Activated CD8-positive, alpha-beta T cell treated with anti-CD3 and anti-CD28 coated beads for 36 hours (primary cell): ENCODE measurements at regions of chr3 and their contacts with region 1.

Region 1: GRCh38 chr3:56753206-56753820 is 48.4 kb downstream of the ARHGEF3 start:
- DNase-seq: peak; percentile 75
- ATAC-seq: peak; percentile 93
- H3K4me3 Mint-ChIP-seq: no peak overlapping the region
- H3K27ac Mint-ChIP-seq: peak overlapping the region; percentile 73
- H3K4me1 Mint-ChIP-seq: peaks cover 63% of the 10 kb centered on the region
- H3K27me3 Mint-ChIP-seq: no peaks in the 10 kb centered on the region
- CTCF ChIP-seq: no peak

Region 2: DNA sequence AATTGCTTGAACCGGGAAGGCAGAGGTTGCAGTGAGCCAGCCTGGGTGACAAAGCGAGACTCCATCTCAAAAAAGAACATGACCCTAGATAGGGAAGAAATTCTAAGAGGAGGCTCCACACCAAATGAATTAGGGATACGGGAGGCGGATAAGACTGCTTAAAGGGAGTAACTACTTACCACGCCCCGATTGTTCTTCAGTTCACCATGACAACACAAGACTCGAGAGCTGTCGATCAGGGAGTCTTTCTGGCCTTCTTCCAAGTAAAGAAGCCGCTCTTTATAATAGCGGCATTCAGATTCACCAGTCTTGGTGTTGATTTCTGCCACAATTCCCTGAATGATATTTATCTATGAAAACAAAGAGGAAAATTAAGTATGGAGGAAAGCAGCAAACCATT is 16.3 kb before region 1 on chr3:
- CTCF ChIA-PET with region 1: interaction called, 17 read pairs
- POLR2A ChIA-PET with region 1: interaction called, 4 read pairs
- intact Hi-C with region 1: no loop called
- DNase-seq: no peak
- ATAC-seq: no peak
- H3K4me3 Mint-ChIP-seq: no peak overlapping the region
- H3K27ac Mint-ChIP-seq: no peak overlapping the region
- H3K4me1 Mint-ChIP-seq: peaks cover 57% of the 10 kb centered on the region
- H3K27me3 Mint-ChIP-seq: no peaks in the 10 kb centered on the region
- CTCF ChIP-seq: no peak

Region 3: GRCh38 chr3:56783644-56784447 is 30.5 kb after region 1 on chr3:
- CTCF ChIA-PET with region 1: interaction called, 22 read pairs
- POLR2A ChIA-PET with region 1: interaction called, 26 read pairs
- intact Hi-C with region 1: loop called (anchors 5 kb)
- DNase-seq: peak; percentile 90
- ATAC-seq: peak; percentile 82
- H3K4me3 Mint-ChIP-seq: peak overlapping the region; percentile 70
- H3K27ac Mint-ChIP-seq: peak overlapping the region; percentile 92
- H3K4me1 Mint-ChIP-seq: peaks cover 95% of the 10 kb centered on the region
- H3K27me3 Mint-ChIP-seq: no peaks in the 10 kb centered on the region
- CTCF ChIP-seq: no peak

Region 4: GRCh38 chr3:56796202-56796601 is 42.9 kb after region 1 on chr3:
- CTCF ChIA-PET with region 1: interaction called, 127 read pairs
- POLR2A ChIA-PET with region 1: interaction called, 44 read pairs
- intact Hi-C with region 1: loop called (anchors 2 kb)
- DNase-seq: peak; percentile 52
- ATAC-seq: peak; percentile 31
- H3K4me3 Mint-ChIP-seq: peak overlapping the region; percentile 87
- H3K27ac Mint-ChIP-seq: peak overlapping the region; percentile 87
- H3K4me1 Mint-ChIP-seq: peaks cover 59% of the 10 kb centered on the region
- H3K27me3 Mint-ChIP-seq: no peaks in the 10 kb centered on the region
- CTCF ChIP-seq: no peak

Region 5: GRCh38 chr3:57029924-57030323 is 276.6 kb after region 1 on chr3:
- CTCF ChIA-PET with region 1: no interaction called
- POLR2A ChIA-PET with region 1: no interaction called
- intact Hi-C with region 1: no loop called
- DNase-seq: no peak
- ATAC-seq: no peak
- H3K4me3 Mint-ChIP-seq: no peak overlapping the region
- H3K27ac Mint-ChIP-seq: no peak overlapping the region
- H3K4me1 Mint-ChIP-seq: no peaks in the 10 kb centered on the region
- H3K27me3 Mint-ChIP-seq: no peaks in the 10 kb centered on the region
- CTCF ChIP-seq: no peak